Mammary epithelial cell (primary cell): ENCODE measurements at regions of chr3 and their contacts with region 1.

Region 1: DNA sequence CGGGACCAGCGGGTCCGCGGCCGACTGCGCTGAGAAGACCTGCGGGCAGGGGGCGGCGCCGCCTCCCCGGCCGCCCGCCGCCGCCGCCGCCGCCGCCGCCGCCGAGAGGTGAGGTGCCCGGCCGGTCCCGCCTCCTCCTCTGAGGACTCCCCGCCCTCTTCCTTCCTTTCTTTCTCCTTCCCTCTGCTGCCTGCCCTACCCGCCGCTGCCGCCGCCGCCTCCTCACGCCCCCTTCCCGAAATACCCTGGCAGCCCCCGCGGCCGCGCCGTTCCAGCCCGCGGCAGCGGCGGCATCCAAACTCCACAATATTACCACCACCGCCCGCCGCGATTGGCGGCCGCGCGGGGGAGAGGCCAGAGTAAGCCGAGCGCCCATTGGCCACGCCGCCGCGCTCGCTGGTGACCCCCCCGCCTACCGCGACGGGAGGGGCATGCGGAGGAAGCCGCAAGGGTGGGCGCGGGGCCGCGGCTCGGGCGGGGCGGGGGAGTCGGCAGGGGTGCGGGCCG is 61.8 kb upstream of the ANKRD28 start:
- DNase-seq: peak; percentile 89
- H3K4me3 ChIP-seq: peak overlapping the region; percentile 66 to 88 (median 80)
- H3K27ac ChIP-seq: peak overlapping the region; percentile 63
- H3K4me1 ChIP-seq: peaks cover 9% of the 10 kb centered on the region
- H3K27me3 ChIP-seq: no peaks in the 10 kb centered on the region
- CTCF ChIP-seq: no peak

Region 2: DNA sequence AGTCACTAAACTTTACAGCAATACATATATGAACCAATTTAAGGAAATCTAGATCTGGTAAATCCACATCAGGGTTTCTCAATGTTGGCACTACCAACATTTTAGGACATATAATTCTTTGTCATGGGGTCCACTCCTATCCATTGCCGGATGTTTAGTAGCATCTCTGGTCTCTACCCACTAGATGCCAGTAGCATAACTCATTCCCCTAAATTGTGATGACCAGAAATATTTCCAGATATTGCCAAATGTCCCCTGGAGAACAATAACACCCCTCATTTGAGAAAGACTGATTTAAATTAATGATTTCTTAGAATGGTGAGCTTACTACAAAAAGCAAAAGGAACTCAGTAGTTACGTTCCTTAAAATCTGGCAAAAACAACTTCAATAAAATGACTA is 38.6 kb before region 1 on chr3:
- CTCF ChIA-PET with region 1: no interaction called
- dilution Hi-C with region 1: no loop called
- in situ Hi-C with region 1: no loop called
- intact Hi-C with region 1: loop called (anchors 5 kb)
- DNase-seq: no peak
- H3K4me3 ChIP-seq: no peak overlapping the region
- H3K27ac ChIP-seq: no peak overlapping the region
- H3K4me1 ChIP-seq: peaks cover 12% of the 10 kb centered on the region
- H3K27me3 ChIP-seq: no peaks in the 10 kb centered on the region
- CTCF ChIP-seq: no peak

Region 3: DNA sequence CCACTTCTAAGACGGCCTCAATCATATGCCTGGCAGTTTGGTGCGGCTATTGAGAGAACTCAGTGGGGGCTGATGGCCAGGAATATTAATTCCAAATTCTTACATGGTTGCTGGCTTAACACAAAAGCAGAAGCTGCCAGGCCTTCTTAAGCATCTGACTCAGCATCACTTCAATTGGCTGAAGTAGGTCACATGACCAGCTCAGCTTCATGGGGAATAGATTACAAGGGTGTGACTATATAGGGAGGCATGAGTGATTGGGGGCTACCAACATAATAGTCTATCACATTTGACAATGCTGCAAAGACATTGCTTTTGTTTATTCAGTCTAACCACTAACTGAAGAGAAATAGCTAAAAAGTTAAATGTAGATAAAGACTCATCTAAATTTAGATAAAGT is 39.8 kb after region 1 on chr3:
- CTCF ChIA-PET with region 1: no interaction called
- dilution Hi-C with region 1: loop called (anchors 5 kb)
- in situ Hi-C with region 1: no loop called
- intact Hi-C with region 1: no loop called
- DNase-seq: peak; percentile 8
- H3K4me3 ChIP-seq: no peak overlapping the region
- H3K27ac ChIP-seq: no peak overlapping the region
- H3K4me1 ChIP-seq: peaks cover 15% of the 10 kb centered on the region
- H3K27me3 ChIP-seq: no peaks in the 10 kb centered on the region
- CTCF ChIP-seq: no peak

Region 4: DNA sequence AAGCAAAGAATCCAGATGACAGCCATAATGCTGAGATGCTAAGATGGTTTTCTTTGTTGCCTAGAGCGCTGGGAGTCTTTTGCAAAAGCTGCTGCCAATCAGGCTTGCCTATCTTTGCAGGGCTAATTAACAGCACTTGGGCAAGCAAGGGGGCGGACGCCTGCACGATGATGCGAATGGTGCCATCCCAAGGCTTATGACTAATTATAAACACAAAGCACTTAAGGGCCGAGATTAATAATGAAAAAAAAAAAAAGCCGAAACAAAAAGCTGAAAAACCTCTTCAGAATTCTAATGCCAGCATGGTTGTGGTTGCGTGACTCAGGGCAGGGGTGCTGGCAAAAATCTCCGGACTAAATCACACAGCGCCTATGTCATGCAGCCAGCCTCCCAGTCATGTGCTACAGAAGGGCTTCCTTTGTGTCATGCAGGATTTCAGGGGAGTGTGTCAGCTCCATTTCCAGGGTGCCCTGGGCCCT is 123.1 kb after region 1 on chr3:
- CTCF ChIA-PET with region 1: no interaction called
- dilution Hi-C with region 1: no loop called
- in situ Hi-C with region 1: no loop called
- intact Hi-C with region 1: loop called (anchors 2 kb)
- DNase-seq: peak; percentile 99
- H3K4me3 ChIP-seq: peak overlapping the region in 2 of 3 experiments; percentile 12
- H3K27ac ChIP-seq: peak overlapping the region; percentile 86
- H3K4me1 ChIP-seq: peaks cover 24% of the 10 kb centered on the region
- H3K27me3 ChIP-seq: no peaks in the 10 kb centered on the region
- CTCF ChIP-seq: no peak